Activated naive CD4-positive, alpha-beta T cell treated with anti-CD3 and anti-CD28 coated beads for 36 hours (primary cell): ENCODE measurements at regions of chr12 and their contacts with region 1.

Region 1: GRCh38 chr12:39443081-39443928 is at the start of gene KIF21A:
- DNase-seq: peak; percentile 86
- H3K4me3 Mint-ChIP-seq: peak within 1 kb of the TSS; percentile 85
- H3K27ac Mint-ChIP-seq: peak within 1 kb of the TSS; percentile 85
- H3K4me1 Mint-ChIP-seq: peaks cover 14% of the 10 kb centered on the region
- H3K27me3 Mint-ChIP-seq: no peaks in the 10 kb centered on the region
- total RNA-seq, gene KIF21A: 21.4 to 22.0 TPM

Region 2: DNA sequence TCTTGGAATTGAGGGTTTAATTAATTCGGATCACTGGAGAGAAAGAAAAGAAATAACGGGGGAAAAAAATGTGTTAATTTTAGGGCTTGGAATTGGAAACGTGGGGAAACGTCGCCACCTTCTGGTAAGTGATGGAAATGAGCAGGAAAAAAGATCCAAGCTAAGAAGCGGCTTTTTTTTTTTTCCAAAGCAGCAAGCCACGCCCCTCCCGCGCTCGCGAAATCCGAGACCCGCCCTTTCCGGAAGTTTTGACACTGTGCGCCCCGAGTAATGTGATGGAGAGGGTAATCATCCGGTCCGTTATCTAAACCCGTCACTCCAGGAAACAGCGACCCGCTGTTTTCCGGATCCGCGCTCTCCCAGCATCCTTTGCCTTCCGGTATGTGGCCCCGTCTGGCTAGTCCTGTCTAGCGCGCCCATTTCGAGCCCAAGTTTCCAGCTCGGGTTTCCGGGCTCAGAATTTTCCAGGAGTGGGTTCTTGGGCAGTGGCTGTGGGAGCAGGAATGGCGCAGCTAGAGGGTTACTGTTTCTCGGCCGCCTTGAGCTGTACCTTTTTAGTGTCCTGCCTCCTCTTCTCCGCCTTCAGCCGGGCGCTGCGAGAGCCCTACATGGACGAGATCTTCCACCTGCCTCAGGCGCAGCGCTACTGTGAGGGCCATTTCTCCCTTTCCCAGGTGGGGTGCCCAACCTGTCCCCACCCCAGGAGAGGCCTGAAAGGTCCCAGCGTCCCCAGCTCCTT is 1126.7 kb before region 1 on chr12 and contains the start of gene ALG10B:
- CTCF ChIA-PET with region 1: no interaction called
- intact Hi-C with region 1: loop called (anchors 2 kb)
- DNase-seq: peak; percentile 95
- H3K4me3 Mint-ChIP-seq: peak within 1 kb of the TSS; percentile 93
- H3K27ac Mint-ChIP-seq: peak within 1 kb of the TSS; percentile 91
- H3K4me1 Mint-ChIP-seq: peaks cover 22% of the 10 kb centered on the region
- H3K27me3 Mint-ChIP-seq: no peaks in the 10 kb centered on the region
- total RNA-seq, gene ALG10B: 16.6 to 17.1 TPM

Region 3: GRCh38 chr12:39287817-39288216 is 155.5 kb before region 1 on chr12:
- CTCF ChIA-PET with region 1: no interaction called
- intact Hi-C with region 1: no loop called
- DNase-seq: no peak
- H3K4me3 Mint-ChIP-seq: no peak overlapping the region
- H3K27ac Mint-ChIP-seq: no peak overlapping the region
- H3K4me1 Mint-ChIP-seq: no peaks in the 10 kb centered on the region
- H3K27me3 Mint-ChIP-seq: peaks cover 6% of the 10 kb centered on the region

Region 4: GRCh38 chr12:39365364-39366001 is 77.8 kb before region 1 on chr12:
- CTCF ChIA-PET with region 1: interaction called, 4 read pairs
- intact Hi-C with region 1: loop called (anchors 1 kb)
- DNase-seq: no peak
- H3K4me3 Mint-ChIP-seq: no peak overlapping the region
- H3K27ac Mint-ChIP-seq: no peak overlapping the region
- H3K4me1 Mint-ChIP-seq: no peaks in the 10 kb centered on the region
- H3K27me3 Mint-ChIP-seq: no peaks in the 10 kb centered on the region

Region 5: GRCh38 chr12:39402922-39403321 is 40.4 kb before region 1 on chr12:
- CTCF ChIA-PET with region 1: no interaction called
- intact Hi-C with region 1: loop called (anchors 1 kb)
- DNase-seq: peak; percentile 18
- H3K4me3 Mint-ChIP-seq: no peak overlapping the region
- H3K27ac Mint-ChIP-seq: no peak overlapping the region
- H3K4me1 Mint-ChIP-seq: peaks cover 15% of the 10 kb centered on the region
- H3K27me3 Mint-ChIP-seq: no peaks in the 10 kb centered on the region

Region 6: DNA sequence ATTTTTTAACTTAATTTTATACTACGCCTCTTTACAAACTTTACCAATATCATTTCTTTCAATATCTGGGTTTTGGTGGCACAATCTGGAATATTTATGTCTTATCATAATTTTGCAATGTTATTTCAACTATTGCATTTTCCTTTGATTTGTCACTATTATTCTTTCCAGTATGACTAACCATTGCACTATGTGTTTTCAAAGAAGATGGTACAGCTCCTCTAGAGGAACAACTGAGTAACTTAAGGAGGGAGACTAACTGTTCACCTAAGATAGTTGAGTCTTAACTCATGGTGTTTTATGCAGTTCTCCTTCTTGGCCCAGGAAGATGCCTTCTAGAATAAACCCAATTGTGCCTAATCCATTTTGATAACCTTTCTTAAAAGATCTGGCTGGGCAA is 60.1 kb after region 1 on chr12:
- CTCF ChIA-PET with region 1: no interaction called
- intact Hi-C with region 1: no loop called
- DNase-seq: no peak
- H3K4me3 Mint-ChIP-seq: no peak overlapping the region
- H3K27ac Mint-ChIP-seq: no peak overlapping the region
- H3K4me1 Mint-ChIP-seq: no peaks in the 10 kb centered on the region
- H3K27me3 Mint-ChIP-seq: no peaks in the 10 kb centered on the region

Region 7: DNA sequence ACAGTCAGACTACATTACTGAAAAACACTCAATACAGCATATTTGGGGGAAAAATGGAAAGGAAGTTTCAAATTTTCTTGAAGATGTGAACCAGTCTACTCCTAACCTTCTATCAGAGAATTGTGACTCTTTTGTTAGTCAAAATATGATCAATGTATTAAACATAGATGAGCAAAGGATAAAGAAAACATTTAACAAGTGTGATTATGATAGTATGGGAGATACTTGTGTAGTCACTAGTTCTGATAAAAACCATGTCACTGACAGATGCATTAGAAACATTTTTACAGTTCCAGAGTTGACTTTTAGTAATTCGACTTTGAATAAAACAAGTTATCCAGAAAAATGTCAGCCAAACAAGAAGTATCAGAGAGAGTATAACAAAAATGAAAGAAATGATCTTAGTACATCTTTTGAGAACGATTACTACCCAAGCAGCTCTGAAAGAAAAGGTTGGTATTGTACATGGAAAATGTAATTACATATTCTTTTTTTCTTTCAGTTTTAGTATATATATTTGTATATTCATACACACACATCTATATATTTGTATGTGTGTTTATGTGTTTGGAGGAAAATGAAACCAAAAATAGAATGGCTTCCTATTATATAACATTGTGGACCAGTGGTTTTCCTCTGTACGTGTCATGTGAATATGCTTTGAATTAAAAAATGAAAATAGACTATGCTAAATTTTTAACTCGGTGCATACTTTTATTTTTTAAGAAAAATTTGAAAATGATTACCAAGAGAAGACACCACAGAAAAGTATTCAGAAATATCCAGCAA is 239.6 kb after region 1 on chr12:
- CTCF ChIA-PET with region 1: no interaction called
- intact Hi-C with region 1: loop called (anchors 2 kb)
- DNase-seq: no peak
- H3K4me3 Mint-ChIP-seq: peak overlapping the region; percentile 75
- H3K27ac Mint-ChIP-seq: peak overlapping the region; percentile 90
- H3K4me1 Mint-ChIP-seq: peaks cover 29% of the 10 kb centered on the region
- H3K27me3 Mint-ChIP-seq: no peaks in the 10 kb centered on the region